Activated CD4-positive, alpha-beta memory T cell treated with anti-CD3 and anti-CD28 coated beads, Interleukin-2, amount 10 ng/mL, durations not matched to agents 7 days and 5 days (primary cell): ENCODE measurements at regions of chr17 and their contacts with region 1.

Region 1: GRCh38 chr17:16438557-16439302 is 23.4 kb downstream of the TRPV2 start:
- DNase-seq: peak; percentile 95
- H3K4me3 Mint-ChIP-seq: peak overlapping the region; percentile 98
- H3K27ac Mint-ChIP-seq: peak overlapping the region; percentile 97
- H3K4me1 Mint-ChIP-seq: peaks cover 47% of the 10 kb centered on the region
- H3K27me3 Mint-ChIP-seq: no peaks in the 10 kb centered on the region

Region 2: DNA sequence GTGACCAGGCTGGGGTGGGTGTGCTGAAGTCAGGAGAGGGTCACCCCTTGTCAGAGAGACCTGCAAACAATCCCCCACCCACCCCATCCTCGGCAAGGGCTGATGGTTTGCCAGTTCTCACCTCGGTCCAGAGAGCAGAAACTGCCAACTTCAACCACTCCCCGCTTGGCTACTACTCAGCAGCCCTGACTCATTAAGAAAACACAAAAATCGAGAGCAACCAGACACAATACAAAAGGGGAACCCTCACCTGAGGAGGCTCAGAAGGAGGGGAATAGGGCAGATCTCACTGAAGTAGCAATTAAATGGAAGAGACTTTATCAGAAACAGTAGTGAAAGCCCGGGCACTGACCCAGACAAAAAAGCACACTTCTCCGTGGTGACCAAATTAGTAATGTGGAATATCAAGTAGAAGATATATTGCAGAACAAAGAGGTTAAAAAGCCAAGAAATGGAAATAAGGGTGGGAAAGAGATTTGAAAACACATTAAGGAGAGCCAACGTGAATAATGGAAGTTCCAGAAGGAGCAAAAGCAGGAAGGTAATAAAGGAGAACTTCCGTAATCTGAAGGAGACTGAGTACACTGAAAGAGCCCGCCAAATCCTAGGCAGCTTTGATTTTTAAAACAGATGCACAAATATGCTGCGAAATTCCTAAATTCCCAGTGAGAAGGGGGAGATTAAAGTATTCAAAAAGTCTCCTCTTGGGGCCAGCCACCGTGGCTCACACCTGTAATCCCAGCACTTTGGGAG is 109.0 kb before region 1 on chr17:
- CTCF ChIA-PET with region 1: no interaction called
- POLR2A ChIA-PET with region 1: no interaction called
- DNase-seq: no peak
- H3K4me3 Mint-ChIP-seq: no peak overlapping the region
- H3K27ac Mint-ChIP-seq: no peak overlapping the region
- H3K4me1 Mint-ChIP-seq: no peaks in the 10 kb centered on the region
- H3K27me3 Mint-ChIP-seq: no peaks in the 10 kb centered on the region

Region 3: DNA sequence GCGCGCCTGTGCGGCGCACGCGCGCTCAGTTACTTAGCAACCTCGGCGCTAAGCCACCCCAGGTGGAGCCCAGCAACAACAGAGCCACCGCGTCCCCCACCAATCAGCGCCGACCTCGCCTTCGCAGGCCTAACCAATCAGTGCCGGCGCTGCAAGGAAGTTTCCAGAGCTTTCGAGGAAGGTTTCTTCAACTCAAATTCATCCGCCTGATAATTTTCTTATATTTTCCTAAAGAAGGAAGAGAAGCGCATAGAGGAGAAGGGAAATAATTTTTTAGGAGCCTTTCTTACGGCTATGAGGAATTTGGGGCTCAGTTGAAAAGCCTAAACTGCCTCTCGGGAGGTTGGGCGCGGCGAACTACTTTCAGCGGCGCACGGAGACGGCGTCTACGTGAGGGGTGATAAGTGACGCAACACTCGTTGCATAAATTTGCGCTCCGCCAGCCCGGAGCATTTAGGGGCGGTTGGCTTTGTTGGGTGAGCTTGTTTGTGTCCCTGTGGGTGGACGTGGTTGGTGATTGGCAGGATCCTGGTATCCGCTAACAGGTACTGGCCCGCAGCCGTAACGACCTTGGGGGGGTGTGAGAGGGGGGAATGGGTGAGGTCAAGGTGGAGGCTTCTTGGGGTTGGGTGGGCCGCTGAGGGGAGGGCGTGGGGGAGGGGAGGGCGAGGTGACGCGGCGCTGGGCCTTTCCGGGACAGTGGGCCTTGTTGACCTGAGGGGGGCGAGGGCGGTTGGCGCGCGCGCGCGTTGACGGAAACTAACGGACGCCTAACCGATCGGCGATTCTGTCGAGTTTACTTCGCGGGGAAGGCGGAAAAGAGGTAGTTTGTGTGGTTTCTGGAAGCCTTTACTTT is 57.9 kb before region 1 on chr17 and contains the start of gene UBB:
- CTCF ChIA-PET with region 1: interaction called, 4 read pairs
- POLR2A ChIA-PET with region 1: interaction called, 55 read pairs
- DNase-seq: peak; percentile 96
- H3K4me3 Mint-ChIP-seq: peak within 1 kb of the TSS; percentile 88
- H3K27ac Mint-ChIP-seq: peak within 1 kb of the TSS; percentile 87
- H3K4me1 Mint-ChIP-seq: peaks cover 34% of the 10 kb centered on the region
- H3K27me3 Mint-ChIP-seq: peaks cover 2% of the 10 kb centered on the region
- total RNA-seq, gene UBB: 1,185 TPM

Region 4: DNA sequence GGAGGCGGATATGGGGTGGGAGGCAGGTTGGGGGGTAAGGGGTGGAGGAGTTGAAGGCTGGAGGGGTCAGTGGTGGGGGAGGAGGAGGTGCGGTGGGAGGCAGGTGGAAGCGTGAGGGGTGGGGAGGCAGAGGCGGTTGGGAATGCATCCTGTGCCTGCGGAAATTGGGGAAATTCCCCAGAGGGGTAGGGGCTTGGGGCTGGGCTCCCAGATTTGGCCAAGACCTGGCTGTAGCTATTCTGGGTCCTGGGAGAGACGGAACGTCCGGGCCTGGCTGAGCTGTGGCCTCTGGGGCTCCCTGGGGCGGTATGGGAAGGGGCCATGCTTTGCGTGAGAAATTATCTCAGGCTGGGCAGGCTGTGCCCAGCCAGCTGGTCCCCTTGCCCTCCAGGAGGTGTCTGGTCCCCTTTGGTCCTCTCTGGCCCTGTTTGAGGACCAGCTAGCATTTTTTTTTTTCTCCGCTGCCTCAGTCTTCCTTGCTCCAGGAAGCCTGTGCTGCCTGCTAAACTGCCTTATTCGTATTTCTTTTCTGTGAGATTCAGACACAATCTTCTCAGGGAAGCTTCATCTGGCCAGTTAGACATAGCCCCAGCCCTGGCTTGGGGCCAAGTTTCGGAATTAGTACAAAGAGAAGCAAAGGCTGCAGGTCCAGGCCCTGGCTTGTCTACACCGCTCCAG is 30.7 kb before region 1 on chr17:
- CTCF ChIA-PET with region 1: no interaction called
- POLR2A ChIA-PET with region 1: no interaction called
- DNase-seq: no peak
- H3K4me3 Mint-ChIP-seq: no peak overlapping the region
- H3K27ac Mint-ChIP-seq: no peak overlapping the region
- H3K4me1 Mint-ChIP-seq: peaks cover 8% of the 10 kb centered on the region
- H3K27me3 Mint-ChIP-seq: peaks cover 15% of the 10 kb centered on the region

Region 5: DNA sequence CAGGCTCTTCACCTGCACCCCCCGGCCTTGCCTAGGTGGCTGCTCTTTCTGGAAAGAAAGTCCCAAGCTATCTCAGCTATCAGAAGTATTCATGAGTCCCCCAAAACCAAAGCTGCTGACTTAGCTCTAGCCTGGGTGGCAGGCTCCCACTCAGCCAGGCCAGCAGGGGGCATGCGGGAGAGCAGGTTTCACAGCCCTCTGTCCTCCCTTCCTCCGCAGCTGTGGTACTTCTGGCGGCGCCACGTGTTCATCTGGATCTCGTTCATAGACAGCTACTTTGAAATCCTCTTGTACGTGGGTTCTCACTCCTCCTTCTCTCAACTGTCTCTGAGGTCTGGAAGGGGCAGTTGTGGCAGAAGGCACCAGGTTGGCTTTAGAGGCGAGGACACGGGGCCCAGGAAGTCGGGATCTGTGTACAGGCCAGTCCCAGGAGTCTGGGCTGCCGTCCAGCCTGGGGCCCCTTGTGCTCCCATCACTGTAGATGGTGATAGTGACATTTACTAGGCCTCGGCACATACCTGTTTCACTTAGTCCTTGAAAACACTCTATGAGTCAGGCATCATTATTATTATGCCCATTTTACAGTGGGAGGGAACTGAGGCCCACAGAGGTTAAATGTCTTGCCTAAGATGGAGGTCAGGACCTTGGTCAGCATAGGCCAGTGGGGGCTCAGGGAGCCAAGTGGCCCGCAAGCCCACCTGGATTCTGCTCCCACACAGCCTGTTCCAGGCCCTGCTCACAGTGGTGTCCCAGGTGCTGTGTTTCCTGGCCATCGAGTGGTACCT is 10.4 kb before region 1 on chr17:
- CTCF ChIA-PET with region 1: interaction called, 20 read pairs
- POLR2A ChIA-PET with region 1: interaction called, 53 read pairs
- DNase-seq: no peak
- H3K4me3 Mint-ChIP-seq: no peak overlapping the region
- H3K27ac Mint-ChIP-seq: no peak overlapping the region
- H3K4me1 Mint-ChIP-seq: no peaks in the 10 kb centered on the region
- H3K27me3 Mint-ChIP-seq: no peaks in the 10 kb centered on the region

Region 6: DNA sequence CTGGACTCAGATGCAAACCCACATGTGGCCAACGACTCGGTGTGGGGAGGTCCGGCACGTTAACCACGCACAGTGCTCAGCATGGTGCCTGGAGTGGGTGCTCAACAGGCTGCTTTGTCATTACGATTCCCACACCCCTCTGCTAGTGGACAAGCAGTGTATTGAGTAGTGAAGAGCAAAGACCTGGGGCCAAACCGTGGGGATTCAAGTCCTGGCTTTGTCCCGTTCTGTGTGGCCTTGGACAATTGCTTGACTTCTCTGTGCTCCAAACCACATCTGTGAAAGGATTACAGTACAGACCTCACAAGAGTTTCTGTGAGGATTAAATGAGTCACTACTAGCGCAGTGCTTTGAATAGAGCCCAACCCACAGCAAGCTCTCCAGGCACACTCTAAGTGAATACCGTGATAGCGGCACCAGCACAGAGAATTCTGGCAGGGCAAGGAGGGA is 10.4 kb after region 1 on chr17:
- CTCF ChIA-PET with region 1: interaction called, 24 read pairs
- POLR2A ChIA-PET with region 1: interaction called, 52 read pairs
- DNase-seq: no peak
- H3K4me3 Mint-ChIP-seq: no peak overlapping the region
- H3K27ac Mint-ChIP-seq: no peak overlapping the region
- H3K4me1 Mint-ChIP-seq: peaks cover 21% of the 10 kb centered on the region
- H3K27me3 Mint-ChIP-seq: no peaks in the 10 kb centered on the region